ENCODE measurements at regions of chr3 and their contacts with region 1.

Region 1: GRCh38 chr3:187738331-187739093 is 6.8 kb downstream of the BCL6 start:
- DNase-seq: peak; percentile 38 to 88 (median 65)
- ATAC-seq: peak; percentile 32
- H3K4me3 ChIP-seq: peak overlapping the region; percentile 88 to 94
- H3K4me3 Mint-ChIP-seq: peak overlapping the region; percentile 94
- H3K27ac ChIP-seq: peak overlapping the region; percentile 44 to 88
- H3K27ac Mint-ChIP-seq: peak overlapping the region; percentile 100
- H3K4me1 ChIP-seq: peaks cover 15% of the 10 kb centered on the region
- H3K4me1 Mint-ChIP-seq: peaks cover 52% of the 10 kb centered on the region
- H3K27me3 ChIP-seq: no peaks in the 10 kb centered on the region
- H3K27me3 Mint-ChIP-seq: no peaks in the 10 kb centered on the region
- CTCF ChIP-seq: peak; percentile 85

Region 2: DNA sequence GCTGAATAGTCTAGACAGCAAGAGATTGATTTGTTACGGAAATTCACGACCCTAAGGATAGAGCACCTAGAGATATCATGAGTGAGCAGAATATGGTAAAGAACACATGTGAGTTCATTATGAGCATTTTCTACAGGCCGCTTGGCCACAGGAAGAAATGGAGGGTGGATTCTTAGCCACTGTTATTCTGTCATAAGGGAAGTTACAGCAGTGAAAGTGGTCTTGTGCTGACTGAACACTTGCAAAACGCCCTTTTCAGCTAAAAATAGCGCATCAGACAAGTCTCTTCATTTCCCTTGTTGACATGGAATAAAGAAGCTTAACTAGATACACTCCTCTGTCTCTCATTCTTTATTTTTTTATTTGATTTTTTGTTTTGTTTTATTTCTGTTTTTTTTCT is 1396.3 kb before region 1 on chr3:
- CTCF ChIA-PET with region 1: no interaction called
- POLR2A ChIA-PET with region 1: no interaction called
- intact Hi-C with region 1: no loop called
- DNase-seq: peak in 1 of 9 experiments; percentile 6
- ATAC-seq: no peak
- H3K4me3 ChIP-seq: no peak overlapping the region
- H3K4me3 Mint-ChIP-seq: no peak overlapping the region
- H3K27ac ChIP-seq: no peak overlapping the region
- H3K27ac Mint-ChIP-seq: no peak overlapping the region
- H3K4me1 ChIP-seq: no peaks in the 10 kb centered on the region
- H3K4me1 Mint-ChIP-seq: peaks cover 9% of the 10 kb centered on the region
- H3K27me3 ChIP-seq: no peaks in the 10 kb centered on the region
- H3K27me3 Mint-ChIP-seq: no peaks in the 10 kb centered on the region
- CTCF ChIP-seq: no peak

Region 3: GRCh38 chr3:188061133-188061532 is 322.6 kb after region 1 on chr3:
- CTCF ChIA-PET with region 1: interaction called, 5 read pairs
- POLR2A ChIA-PET with region 1: no interaction called
- intact Hi-C with region 1: loop called in 1 of 2 experiments (anchors 1 kb)
- DNase-seq: peak in 6 of 9 experiments; percentile 29 to 73 (median 50)
- ATAC-seq: peak; percentile 84
- H3K4me3 ChIP-seq: no peak overlapping the region
- H3K4me3 Mint-ChIP-seq: no peak overlapping the region
- H3K27ac ChIP-seq: peak overlapping the region in 1 of 2 experiments; percentile 21
- H3K27ac Mint-ChIP-seq: peak overlapping the region; percentile 57
- H3K4me1 ChIP-seq: peaks cover 4% of the 10 kb centered on the region
- H3K4me1 Mint-ChIP-seq: peaks cover 17% of the 10 kb centered on the region
- H3K27me3 ChIP-seq: no peaks in the 10 kb centered on the region
- H3K27me3 Mint-ChIP-seq: no peaks in the 10 kb centered on the region
- CTCF ChIP-seq: no peak

Region 4: GRCh38 chr3:188362405-188362831 is 623.9 kb after region 1 on chr3:
- CTCF ChIA-PET with region 1: interaction called, 13 read pairs
- POLR2A ChIA-PET with region 1: no interaction called
- intact Hi-C with region 1: loop called (anchors 2 kb)
- DNase-seq: peak in 3 of 9 experiments; percentile 44 to 65 (median 61)
- ATAC-seq: peak; percentile 66
- H3K4me3 ChIP-seq: no peak overlapping the region
- H3K4me3 Mint-ChIP-seq: peak overlapping the region; percentile 62
- H3K27ac ChIP-seq: peak overlapping the region in 1 of 2 experiments; percentile 9
- H3K27ac Mint-ChIP-seq: peak overlapping the region; percentile 89
- H3K4me1 ChIP-seq: peaks cover 47% of the 10 kb centered on the region
- H3K4me1 Mint-ChIP-seq: peaks cover 57% of the 10 kb centered on the region
- H3K27me3 ChIP-seq: no peaks in the 10 kb centered on the region
- H3K27me3 Mint-ChIP-seq: no peaks in the 10 kb centered on the region
- CTCF ChIP-seq: no peak

Region 5: GRCh38 chr3:188749010-188749617 is 1010.6 kb after region 1 on chr3:
- CTCF ChIA-PET with region 1: interaction called, 167 read pairs
- POLR2A ChIA-PET with region 1: interaction called, 8 read pairs
- intact Hi-C with region 1: loop called (anchors 1 kb)
- DNase-seq: peak; percentile 26 to 77 (median 59)
- ATAC-seq: peak; percentile 73
- H3K4me3 ChIP-seq: no peak overlapping the region
- H3K4me3 Mint-ChIP-seq: no peak overlapping the region
- H3K27ac ChIP-seq: no peak overlapping the region
- H3K27ac Mint-ChIP-seq: no peak overlapping the region
- H3K4me1 ChIP-seq: no peaks in the 10 kb centered on the region
- H3K4me1 Mint-ChIP-seq: peaks cover 2% of the 10 kb centered on the region
- H3K27me3 ChIP-seq: no peaks in the 10 kb centered on the region
- H3K27me3 Mint-ChIP-seq: no peaks in the 10 kb centered on the region
- CTCF ChIP-seq: peak; percentile 76

Region 6: GRCh38 chr3:188947401-188948280 is 1209.1 kb after region 1 on chr3:
- CTCF ChIA-PET with region 1: interaction called, 425 read pairs
- POLR2A ChIA-PET with region 1: no interaction called
- intact Hi-C with region 1: no loop called
- DNase-seq: peak in 2 of 9 experiments; percentile 11 to 33
- ATAC-seq: no peak
- H3K4me3 ChIP-seq: peak overlapping the region; percentile 7 to 12
- H3K4me3 Mint-ChIP-seq: peak overlapping the region; percentile 20
- H3K27ac ChIP-seq: no peak overlapping the region
- H3K27ac Mint-ChIP-seq: no peak overlapping the region
- H3K4me1 ChIP-seq: peaks cover 3% of the 10 kb centered on the region
- H3K4me1 Mint-ChIP-seq: no peaks in the 10 kb centered on the region
- H3K27me3 ChIP-seq: peaks cover 2 to 7% of the 10 kb centered on the region in 2 experiments
- H3K27me3 Mint-ChIP-seq: peaks cover 11% of the 10 kb centered on the region
- CTCF ChIP-seq: no peak

Region 7: GRCh38 chr3:189139611-189139940 is 1401.1 kb after region 1 on chr3:
- CTCF ChIA-PET with region 1: interaction called, 177 read pairs
- POLR2A ChIA-PET with region 1: interaction called, 13 read pairs
- intact Hi-C with region 1: loop called in 1 of 2 experiments (anchors 1 kb)
- DNase-seq: no peak
- ATAC-seq: no peak
- H3K4me3 ChIP-seq: no peak overlapping the region
- H3K4me3 Mint-ChIP-seq: no peak overlapping the region
- H3K27ac ChIP-seq: no peak overlapping the region
- H3K27ac Mint-ChIP-seq: no peak overlapping the region
- H3K4me1 ChIP-seq: peaks cover 11% of the 10 kb centered on the region
- H3K4me1 Mint-ChIP-seq: peaks cover 21% of the 10 kb centered on the region
- H3K27me3 ChIP-seq: no peaks in the 10 kb centered on the region
- H3K27me3 Mint-ChIP-seq: no peaks in the 10 kb centered on the region
- CTCF ChIP-seq: no peak

Measured in CD8-positive, alpha-beta T cell (primary cell).